Aorta (tissue), 5 donors: ENCODE measurements at regions of chr21 and their contacts with region 1.

Region 1: DNA sequence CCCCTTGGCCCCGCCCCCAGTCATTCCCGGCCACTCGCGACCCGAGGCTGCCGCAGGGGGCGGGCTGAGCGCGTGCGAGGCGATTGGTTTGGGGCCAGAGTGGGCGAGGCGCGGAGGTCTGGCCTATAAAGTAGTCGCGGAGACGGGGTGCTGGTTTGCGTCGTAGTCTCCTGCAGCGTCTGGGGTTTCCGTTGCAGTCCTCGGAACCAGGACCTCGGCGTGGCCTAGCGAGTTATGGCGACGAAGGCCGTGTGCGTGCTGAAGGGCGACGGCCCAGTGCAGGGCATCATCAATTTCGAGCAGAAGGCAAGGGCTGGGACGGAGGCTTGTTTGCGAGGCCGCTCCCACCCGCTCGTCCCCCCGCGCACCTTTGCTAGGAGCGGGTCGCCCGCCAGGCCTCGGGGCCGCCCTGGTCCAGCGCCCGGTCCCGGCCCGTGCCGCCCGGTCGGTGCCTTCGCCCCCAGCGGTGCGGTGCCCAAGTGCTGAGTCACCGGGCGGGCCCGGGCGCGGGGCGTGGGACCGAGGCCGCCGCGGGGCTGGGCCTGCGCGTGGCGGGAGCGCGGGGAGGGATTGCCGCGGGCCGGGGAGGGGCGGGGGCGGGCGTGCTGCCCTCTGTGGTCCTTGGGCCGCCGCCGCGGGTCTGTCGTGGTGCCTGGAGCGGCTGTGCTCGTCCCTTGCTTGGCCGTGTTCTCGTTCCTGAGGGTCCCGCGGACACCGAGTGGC is at the start of gene SOD1:
- DNase-seq: peak; percentile 97 to 98
- ATAC-seq: peak; percentile 98
- H3K4me3 ChIP-seq: peak within 1 kb of the TSS; percentile 65 to 76
- H3K27ac ChIP-seq: peak within 1 kb of the TSS; percentile 77 to 89
- H3K4me1 ChIP-seq: peaks cover 0 to 5% of the 10 kb centered on the region in 2 donors
- H3K27me3 ChIP-seq: no peaks in the 10 kb centered on the region
- total RNA-seq, gene SOD1: 167 to 176 TPM

Region 2: DNA sequence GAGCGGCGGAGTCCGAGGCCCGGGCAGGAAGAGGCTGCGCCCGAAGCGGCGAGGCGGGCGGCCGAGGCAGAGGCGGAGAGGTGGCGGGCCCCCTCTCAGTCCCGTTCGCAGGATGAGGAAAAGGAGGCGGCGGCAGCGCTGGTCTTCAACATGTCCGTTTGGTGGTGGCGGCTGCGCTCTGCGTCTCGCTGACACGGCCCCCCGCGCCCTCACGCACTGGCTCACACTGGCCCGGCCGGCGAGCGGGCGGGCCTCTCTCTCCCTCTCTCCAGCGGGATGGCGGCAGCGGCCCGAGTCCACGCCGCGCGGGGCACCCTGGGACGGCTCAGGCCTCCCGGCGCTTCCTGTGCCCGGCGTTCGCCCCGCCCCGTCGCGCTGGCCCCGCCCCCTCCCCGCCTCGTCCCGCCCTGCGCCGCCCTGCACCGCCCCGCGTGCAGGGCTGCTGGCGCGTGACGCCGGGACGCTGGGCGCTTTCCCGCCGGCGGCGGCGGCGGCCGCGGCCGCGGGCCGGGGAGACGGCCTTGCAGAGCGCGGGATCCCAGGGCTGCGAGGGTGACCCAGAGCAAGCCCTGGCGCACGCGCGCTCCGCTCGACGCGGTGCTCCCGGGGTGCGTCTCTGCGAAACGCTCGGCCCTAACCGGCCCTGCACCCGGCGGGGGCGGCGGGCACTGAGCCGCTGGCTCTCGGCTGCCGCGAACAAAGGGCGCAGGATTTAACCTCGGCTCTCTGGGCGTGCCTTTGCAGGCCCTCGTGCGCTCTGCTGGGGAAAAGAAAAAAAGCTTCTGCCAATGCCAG is 72.3 kb after region 1 on chr21 and contains the start of gene SCAF4:
- intact Hi-C with region 1: loop called (anchors 5 kb)
- DNase-seq: peak; percentile 94 to 97
- ATAC-seq: peak; percentile 96
- H3K4me3 ChIP-seq: peak within 1 kb of the TSS; percentile 80 to 100
- H3K27ac ChIP-seq: peak within 1 kb of the TSS; percentile 83 to 87
- H3K4me1 ChIP-seq: peaks cover 0 to 6% of the 10 kb centered on the region in 2 donors
- H3K27me3 ChIP-seq: no peaks in the 10 kb centered on the region
- total RNA-seq, gene SCAF4: 32.2 to 33.9 TPM

Region 3: GRCh38 chr21:32278518-32279376 is 619.0 kb after region 1 on chr21 and contains the start of gene MIS18A:
- intact Hi-C with region 1: loop called in 1 of 2 experiments (anchors 10 kb)
- DNase-seq: peak; percentile 97 to 99
- ATAC-seq: peak; percentile 98
- H3K4me3 ChIP-seq: peak within 1 kb of the TSS; percentile 78 to 80
- H3K27ac ChIP-seq: no peak within 1 kb of the TSS
- H3K4me1 ChIP-seq: no peaks in the 10 kb centered on the region
- H3K27me3 ChIP-seq: no peaks in the 10 kb centered on the region
- total RNA-seq, gene MIS18A: 4.6 to 5.5 TPM